Activated CD4-positive, alpha-beta T cell treated with anti-CD3 and anti-CD28 coated beads, Interleukin-2, amount 10 ng/mL, durations not matched to agents 7 days and 5 days (primary cell): ENCODE measurements at regions of chr4 and their contacts with region 1.

Region 1: GRCh38 chr4:105473324-105474098 is at the start of gene PPA2:
- DNase-seq: peak; percentile 68
- H3K4me3 Mint-ChIP-seq: peak within 1 kb of the TSS; percentile 98
- H3K27ac Mint-ChIP-seq: peak within 1 kb of the TSS; percentile 99
- H3K4me1 Mint-ChIP-seq: peaks cover 36% of the 10 kb centered on the region
- H3K27me3 Mint-ChIP-seq: peaks cover 4% of the 10 kb centered on the region
- total RNA-seq, gene PPA2: 40.1 to 49.8 TPM

Region 2: GRCh38 chr4:104577405-104577804 is 896.1 kb before region 1 on chr4:
- CTCF ChIA-PET with region 1: no interaction called
- POLR2A ChIA-PET with region 1: no interaction called
- DNase-seq: no peak
- H3K4me3 Mint-ChIP-seq: no peak overlapping the region
- H3K27ac Mint-ChIP-seq: no peak overlapping the region
- H3K4me1 Mint-ChIP-seq: no peaks in the 10 kb centered on the region
- H3K27me3 Mint-ChIP-seq: no peaks in the 10 kb centered on the region

Region 3: DNA sequence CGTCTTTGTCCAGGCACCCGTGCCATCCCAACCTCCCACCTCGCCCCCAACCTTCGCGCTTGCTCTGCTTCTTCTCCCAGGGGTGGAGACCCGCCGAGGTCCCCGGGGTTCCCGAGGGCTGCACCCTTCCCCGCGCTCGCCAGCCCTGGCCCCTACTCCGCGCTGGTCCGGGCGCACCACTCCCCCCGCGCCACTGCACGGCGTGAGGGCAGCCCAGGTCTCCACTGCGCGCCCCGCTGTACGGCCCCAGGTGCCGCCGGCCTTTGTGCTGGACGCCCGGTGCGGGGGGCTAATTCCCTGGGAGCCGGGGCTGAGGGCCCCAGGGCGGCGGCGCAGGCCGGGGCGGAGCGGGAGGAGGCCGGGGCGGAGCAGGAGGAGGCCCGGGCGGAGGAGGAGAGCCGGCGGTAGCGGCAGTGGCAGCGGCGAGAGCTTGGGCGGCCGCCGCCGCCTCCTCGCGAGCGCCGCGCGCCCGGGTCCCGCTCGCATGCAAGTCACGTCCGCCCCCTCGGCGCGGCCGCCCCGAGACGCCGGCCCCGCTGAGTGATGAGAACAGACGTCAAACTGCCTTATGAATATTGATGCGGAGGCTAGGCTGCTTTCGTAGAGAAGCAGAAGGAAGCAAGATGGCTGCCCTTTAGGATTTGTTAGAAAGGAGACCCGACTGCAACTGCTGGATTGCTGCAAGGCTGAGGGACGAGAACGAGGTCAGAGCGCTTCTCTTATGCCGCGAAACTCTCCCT is 327.1 kb before region 1 on chr4 and contains the start of gene TET2:
- CTCF ChIA-PET with region 1: interaction called, 10 read pairs
- POLR2A ChIA-PET with region 1: no interaction called
- DNase-seq: peak; percentile 85
- H3K4me3 Mint-ChIP-seq: peak within 1 kb of the TSS; percentile 96
- H3K27ac Mint-ChIP-seq: peak within 1 kb of the TSS; percentile 100
- H3K4me1 Mint-ChIP-seq: peaks cover 37% of the 10 kb centered on the region
- H3K27me3 Mint-ChIP-seq: no peaks in the 10 kb centered on the region
- total RNA-seq, gene TET2: 22.6 to 25.3 TPM

Region 4: GRCh38 chr4:105483840-105484239 is 10.3 kb after region 1 on chr4:
- CTCF ChIA-PET with region 1: interaction called, 13 read pairs
- POLR2A ChIA-PET with region 1: no interaction called
- DNase-seq: no peak
- H3K4me3 Mint-ChIP-seq: no peak overlapping the region
- H3K27ac Mint-ChIP-seq: no peak overlapping the region
- H3K4me1 Mint-ChIP-seq: no peaks in the 10 kb centered on the region
- H3K27me3 Mint-ChIP-seq: no peaks in the 10 kb centered on the region